CD4-positive, alpha-beta memory T cell (primary cell): ENCODE measurements at regions of chr14 and their contacts with region 1.

Region 1: GRCh38 chr14:61461808-61462275 is 140.5 kb downstream of the PRKCH start:
- DNase-seq: peak; percentile 58 to 71 (median 69)
- H3K4me3 ChIP-seq: no peak overlapping the region
- H3K4me3 Mint-ChIP-seq: peak overlapping the region in 5 of 8 donors; percentile 21 to 51 (median 47)
- H3K27ac ChIP-seq: peak overlapping the region; percentile 22
- H3K27ac Mint-ChIP-seq: peak overlapping the region; percentile 88 to 97 (median 92)
- H3K4me1 ChIP-seq: peaks cover 46% of the 10 kb centered on the region
- H3K4me1 Mint-ChIP-seq: peaks cover 47 to 77% (median 60%) of the 10 kb centered on the region in 4 donors
- H3K27me3 ChIP-seq: no peaks in the 10 kb centered on the region
- H3K27me3 Mint-ChIP-seq: no peaks in the 10 kb centered on the region

Region 2: DNA sequence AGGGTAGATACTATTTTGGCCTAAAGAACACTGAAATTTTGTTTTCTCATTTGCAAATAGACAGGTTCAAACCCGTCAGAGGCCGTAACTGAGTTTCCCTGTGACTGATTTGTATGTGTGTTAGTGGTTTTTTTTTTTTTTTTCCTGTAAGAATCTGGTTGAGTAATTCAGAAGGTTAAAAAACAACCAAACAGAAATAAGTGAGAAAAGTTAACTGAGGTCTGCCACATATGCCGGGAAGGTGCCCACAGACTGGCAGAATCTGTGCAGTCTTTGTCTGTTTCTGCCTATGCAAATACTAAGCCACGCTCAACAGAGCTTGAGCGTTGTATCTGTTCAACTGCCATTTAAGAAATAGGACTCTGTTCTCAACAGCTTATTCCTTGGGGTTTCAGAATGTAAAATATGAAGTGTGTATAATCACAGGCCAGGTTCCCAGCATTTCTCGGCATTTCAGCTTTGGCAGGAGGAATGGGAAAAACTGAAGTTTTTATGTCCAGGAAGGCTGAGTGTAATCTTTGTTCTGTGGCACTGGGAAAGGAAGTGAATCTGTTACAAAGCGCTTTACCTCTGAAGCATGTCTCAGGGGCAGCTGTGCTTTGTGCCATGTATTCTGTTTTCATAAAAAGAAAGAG is 41.4 kb after region 1 on chr14:
- CTCF ChIA-PET with region 1: interaction called, 3 read pairs
- POLR2A ChIA-PET with region 1: no interaction called
- intact Hi-C with region 1: loop called (anchors 5 kb)
- DNase-seq: peak; percentile 58 to 76 (median 64)
- H3K4me3 ChIP-seq: no peak overlapping the region
- H3K4me3 Mint-ChIP-seq: peak overlapping the region; percentile 53 to 86 (median 76)
- H3K27ac ChIP-seq: peak overlapping the region; percentile 55
- H3K27ac Mint-ChIP-seq: peak overlapping the region in 6 of 7 donors; percentile 96 to 100 (median 98)
- H3K4me1 ChIP-seq: peaks cover 100% of the 10 kb centered on the region
- H3K4me1 Mint-ChIP-seq: peaks cover 68 to 99% (median 89%) of the 10 kb centered on the region in 4 donors
- H3K27me3 ChIP-seq: no peaks in the 10 kb centered on the region
- H3K27me3 Mint-ChIP-seq: no peaks in the 10 kb centered on the region

Region 3: DNA sequence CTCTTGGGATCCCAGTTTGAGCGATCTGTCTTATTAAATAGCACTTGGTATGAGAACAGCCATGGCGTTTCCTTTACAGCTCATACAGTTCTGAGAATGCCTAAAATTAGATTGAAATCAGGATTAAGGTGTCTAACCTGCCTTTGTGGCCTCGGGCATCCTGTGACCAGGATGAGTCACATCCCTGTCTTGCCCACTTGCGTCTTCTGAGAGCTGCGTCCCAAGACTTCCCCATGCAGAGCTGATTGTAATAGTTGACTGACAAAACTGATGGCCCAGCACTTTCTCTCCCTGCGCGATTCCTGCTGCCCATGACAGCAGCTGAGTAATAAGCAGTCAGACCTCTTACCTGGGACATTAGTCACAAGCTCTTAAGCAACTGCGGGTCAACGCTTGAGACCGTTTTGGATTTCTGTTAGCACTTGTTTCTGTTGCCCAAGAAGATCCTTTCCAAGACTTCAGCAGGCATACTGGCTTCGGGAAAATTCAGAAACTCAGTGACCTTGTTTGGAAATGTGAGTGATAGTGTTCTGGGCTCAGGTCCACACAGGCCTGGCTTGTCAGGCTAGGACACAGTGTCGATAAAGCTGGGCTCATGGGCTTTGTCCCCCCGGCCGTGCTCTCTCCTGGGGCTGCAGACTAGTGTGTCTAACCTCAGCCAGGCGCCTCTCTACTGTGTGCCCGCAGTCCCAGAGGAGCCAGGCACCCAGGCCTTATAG is 63.6 kb after region 1 on chr14:
- CTCF ChIA-PET with region 1: interaction called, 11 read pairs
- POLR2A ChIA-PET with region 1: no interaction called
- intact Hi-C with region 1: no loop called
- DNase-seq: peak in 3 of 5 donors; percentile 34 to 79 (median 34)
- H3K4me3 ChIP-seq: no peak overlapping the region
- H3K4me3 Mint-ChIP-seq: peak overlapping the region in 7 of 8 donors; percentile 17 to 64 (median 41)
- H3K27ac ChIP-seq: peak overlapping the region; percentile 37
- H3K27ac Mint-ChIP-seq: peak overlapping the region; percentile 88 to 95 (median 91)
- H3K4me1 ChIP-seq: peaks cover 55% of the 10 kb centered on the region
- H3K4me1 Mint-ChIP-seq: peaks cover 59 to 87% (median 72%) of the 10 kb centered on the region in 4 donors
- H3K27me3 ChIP-seq: no peaks in the 10 kb centered on the region
- H3K27me3 Mint-ChIP-seq: no peaks in the 10 kb centered on the region

Region 4: DNA sequence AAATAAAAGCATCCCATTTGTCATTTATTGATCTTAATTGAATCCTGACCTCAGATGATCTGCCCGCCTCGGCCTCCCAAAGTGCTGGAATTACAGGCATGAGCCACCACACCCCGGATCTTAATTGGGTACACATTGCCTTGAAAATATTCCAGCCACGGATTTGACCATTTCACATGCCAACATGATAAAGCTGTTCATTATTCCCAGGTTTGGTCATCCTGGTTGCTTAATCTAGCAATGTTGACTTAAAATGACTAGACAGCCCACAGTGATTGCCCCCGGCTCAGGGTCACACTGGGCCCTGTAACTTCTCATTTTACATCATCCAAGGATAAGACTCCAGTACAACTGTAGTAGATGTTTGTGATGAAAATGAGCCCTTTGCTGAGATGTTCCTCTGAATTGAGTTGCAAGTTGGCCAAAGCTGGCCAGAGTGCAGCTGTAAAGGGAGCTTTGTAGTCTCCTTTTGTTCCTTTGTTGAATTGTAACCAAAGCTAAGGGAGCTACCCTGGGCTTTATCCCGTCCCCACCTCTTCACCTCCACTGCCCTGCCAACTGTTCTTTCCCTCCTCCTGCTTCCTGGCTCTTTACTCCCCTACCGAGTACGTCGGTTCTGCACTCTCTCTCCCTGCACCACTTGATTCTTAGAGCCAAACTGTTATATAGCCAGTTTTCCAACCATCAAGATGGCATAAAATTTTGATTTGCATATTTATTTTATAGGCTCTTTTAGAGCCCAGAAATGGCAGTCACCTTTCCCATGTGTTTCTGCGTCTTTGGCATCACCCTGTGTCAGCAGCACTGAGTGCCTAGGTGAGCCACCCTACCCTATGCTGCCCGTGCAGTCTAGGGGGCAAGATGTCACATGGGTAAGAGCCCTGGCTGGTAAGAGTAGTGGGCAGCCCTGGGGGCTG is 92.1 kb after region 1 on chr14:
- CTCF ChIA-PET with region 1: interaction called, 5 read pairs
- POLR2A ChIA-PET with region 1: no interaction called
- intact Hi-C with region 1: loop called (anchors 5 kb)
- DNase-seq: no peak
- H3K4me3 ChIP-seq: no peak overlapping the region
- H3K4me3 Mint-ChIP-seq: peak overlapping the region in 2 of 8 donors; percentile 15 to 45
- H3K27ac ChIP-seq: no peak overlapping the region
- H3K27ac Mint-ChIP-seq: peak overlapping the region in 6 of 7 donors; percentile 23 to 92 (median 72)
- H3K4me1 ChIP-seq: peaks cover 21% of the 10 kb centered on the region
- H3K4me1 Mint-ChIP-seq: peaks cover 20 to 54% (median 29%) of the 10 kb centered on the region in 4 donors
- H3K27me3 ChIP-seq: no peaks in the 10 kb centered on the region
- H3K27me3 Mint-ChIP-seq: no peaks in the 10 kb centered on the region

Region 5: GRCh38 chr14:61730756-61731373 is 269.0 kb after region 1 on chr14:
- CTCF ChIA-PET with region 1: interaction called, 48 read pairs
- POLR2A ChIA-PET with region 1: interaction called, 3 read pairs
- intact Hi-C with region 1: loop called (anchors 1 kb)
- DNase-seq: peak in 4 of 5 donors; percentile 30 to 34 (median 30)
- H3K4me3 ChIP-seq: no peak overlapping the region
- H3K4me3 Mint-ChIP-seq: no peak overlapping the region
- H3K27ac ChIP-seq: no peak overlapping the region
- H3K27ac Mint-ChIP-seq: peak overlapping the region in 6 of 7 donors; percentile 2 to 83 (median 52)
- H3K4me1 ChIP-seq: peaks cover 5% of the 10 kb centered on the region
- H3K4me1 Mint-ChIP-seq: peaks cover 10 to 16% (median 12%) of the 10 kb centered on the region in 4 donors
- H3K27me3 ChIP-seq: no peaks in the 10 kb centered on the region
- H3K27me3 Mint-ChIP-seq: no peaks in the 10 kb centered on the region

Region 6: DNA sequence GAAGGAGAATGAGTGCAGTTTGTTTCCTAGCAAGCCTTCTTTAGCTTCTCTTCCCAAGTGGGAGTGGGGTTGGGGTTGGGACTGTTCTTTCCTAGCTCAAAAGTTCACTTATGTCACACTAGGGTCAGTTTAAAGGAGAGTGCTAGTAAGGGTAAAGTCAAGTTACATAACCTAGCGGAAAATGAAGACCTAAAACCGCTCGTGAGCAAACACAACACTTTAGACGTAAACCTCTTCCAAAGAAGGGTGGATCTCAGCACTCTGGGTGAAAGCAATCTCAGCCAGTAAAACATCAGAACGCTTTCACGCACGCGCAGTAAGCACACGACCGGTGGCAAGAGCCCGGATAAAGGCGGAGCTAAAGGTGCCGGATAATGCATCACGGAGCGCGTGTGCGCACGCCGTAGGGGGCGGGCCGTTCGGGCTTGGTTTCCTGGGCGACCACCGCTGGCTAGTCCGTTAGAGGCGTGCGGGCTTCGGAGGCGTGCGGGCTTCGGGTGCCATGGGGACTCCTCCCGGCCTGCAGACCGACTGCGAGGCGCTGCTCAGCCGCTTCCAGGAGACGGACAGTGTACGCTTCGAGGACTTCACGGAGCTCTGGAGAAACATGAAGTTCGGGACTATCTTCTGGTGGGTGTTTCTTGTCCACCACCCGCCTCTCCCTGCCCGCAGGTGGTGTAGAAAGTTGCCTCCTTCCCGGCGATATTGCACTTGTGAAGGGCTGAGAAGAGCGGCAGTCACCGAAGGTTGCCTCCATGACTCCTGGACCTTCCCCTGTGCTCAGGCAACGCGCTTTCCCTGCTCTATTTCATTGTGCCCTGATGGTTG is 300.3 kb after region 1 on chr14 and contains the start of gene SNAPC1:
- CTCF ChIA-PET with region 1: interaction called, 11 read pairs
- POLR2A ChIA-PET with region 1: no interaction called
- intact Hi-C with region 1: no loop called
- DNase-seq: peak; percentile 96 to 98 (median 97)
- H3K4me3 ChIP-seq: peak within 1 kb of the TSS; percentile 80 to 85
- H3K4me3 Mint-ChIP-seq: peak within 1 kb of the TSS; percentile 96 to 100 (median 99)
- H3K27ac ChIP-seq: peak within 1 kb of the TSS; percentile 90
- H3K27ac Mint-ChIP-seq: peak within 1 kb of the TSS; percentile 99 to 100 (median 100)
- H3K4me1 ChIP-seq: peaks cover 38% of the 10 kb centered on the region
- H3K4me1 Mint-ChIP-seq: peaks cover 25 to 54% (median 31%) of the 10 kb centered on the region in 4 donors
- H3K27me3 ChIP-seq: no peaks in the 10 kb centered on the region
- H3K27me3 Mint-ChIP-seq: no peaks in the 10 kb centered on the region
- total RNA-seq, gene SNAPC1: 4.0 to 4.2 TPM

Region 7: GRCh38 chr14:62126879-62127478 is 665.1 kb after region 1 on chr14:
- CTCF ChIA-PET with region 1: no interaction called
- POLR2A ChIA-PET with region 1: no interaction called
- intact Hi-C with region 1: loop called (anchors 1 kb)
- DNase-seq: peak in 4 of 5 donors; percentile 16 to 34 (median 30)
- H3K4me3 ChIP-seq: no peak overlapping the region
- H3K4me3 Mint-ChIP-seq: no peak overlapping the region
- H3K27ac ChIP-seq: no peak overlapping the region
- H3K27ac Mint-ChIP-seq: no peak overlapping the region
- H3K4me1 ChIP-seq: no peaks in the 10 kb centered on the region
- H3K4me1 Mint-ChIP-seq: no peaks in the 10 kb centered on the region
- H3K27me3 ChIP-seq: peaks cover 7% of the 10 kb centered on the region
- H3K27me3 Mint-ChIP-seq: peaks cover 21 to 22% of the 10 kb centered on the region in 2 donors